HEK293T (cell line): ENCODE measurements at regions of chr1 and their contacts with region 1.

Region 1: DNA sequence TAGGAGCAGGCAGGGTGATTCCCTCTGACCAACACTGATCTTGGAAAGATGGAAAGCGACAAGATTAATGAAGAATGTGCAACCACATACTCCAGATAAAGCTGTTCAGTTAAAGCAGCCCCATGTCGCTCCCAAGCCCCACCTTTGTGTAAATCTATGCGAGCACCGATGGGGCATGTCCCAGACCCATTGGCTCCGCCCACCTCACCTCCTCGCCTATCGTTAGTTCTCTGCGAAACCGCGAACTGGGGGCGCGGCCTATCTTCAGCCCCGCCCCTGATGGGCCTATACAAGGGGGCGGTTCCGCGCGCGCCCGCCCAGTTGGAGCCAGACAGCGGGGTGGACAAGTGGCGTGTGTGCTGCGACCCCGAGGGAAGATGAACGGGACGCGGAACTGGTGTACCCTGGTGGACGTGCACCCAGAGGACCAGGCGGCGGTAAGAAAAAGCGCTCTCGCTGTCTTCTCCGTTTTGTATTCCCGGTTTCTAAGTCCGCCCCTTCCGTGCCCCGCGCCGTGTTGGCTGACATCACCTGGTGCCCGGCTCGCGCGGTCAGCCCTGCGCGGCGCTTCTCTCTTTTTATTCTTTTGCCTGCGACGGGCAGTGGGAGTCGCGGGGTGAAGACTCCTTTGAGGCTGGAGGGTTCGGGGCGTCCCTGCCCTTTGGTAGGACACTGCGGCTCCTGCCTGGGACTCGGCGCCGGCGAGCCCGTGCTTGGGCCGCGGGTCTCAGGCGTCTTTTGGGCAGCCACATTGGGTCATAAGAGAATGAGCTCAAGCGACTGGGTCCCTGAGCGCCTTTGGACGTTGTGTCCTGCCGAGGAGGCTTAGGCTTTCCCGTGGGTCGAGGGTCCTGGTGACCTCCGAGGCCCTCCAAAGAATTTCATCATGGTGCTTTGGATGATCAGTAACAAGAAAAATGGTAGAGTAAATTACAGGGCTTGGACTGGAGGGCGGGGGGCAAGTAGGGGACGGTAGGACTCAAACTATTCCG is at the start of gene TUFT1:
- DNase-seq: peak; percentile 99

Region 2: GRCh38 chr1:151563382-151563781 is 23.1 kb after region 1 on chr1:
- CTCF ChIA-PET with region 1: no interaction called
- POLR2A ChIA-PET with region 1: interaction called, 13 read pairs
- DNase-seq: no peak

Region 3: GRCh38 chr1:151739590-151740375 is 199.5 kb after region 1 on chr1:
- CTCF ChIA-PET with region 1: interaction called, 11 read pairs
- POLR2A ChIA-PET with region 1: no interaction called
- DNase-seq: no peak